ENCODE measurements at regions of chr1 and their contacts with region 1.

Region 1: GRCh38 chr1:183827801-183828200 is 22.9 kb downstream of the RGL1 start:
- DNase-seq: no peak
- H3K4me3 ChIP-seq: no peak overlapping the region
- H3K27ac ChIP-seq: no peak overlapping the region
- H3K4me1 ChIP-seq: no peaks in the 10 kb centered on the region
- H3K27me3 ChIP-seq: no peaks in the 10 kb centered on the region
- CTCF ChIP-seq: no peak
- POLR2A ChIP-seq: no peak

Region 2: GRCh38 chr1:183783767-183784637 is 43.8 kb before region 1 on chr1:
- intact Hi-C with region 1: no loop called
- DNase-seq: peak in 1 of 2 donors; percentile 37
- H3K4me3 ChIP-seq: no peak overlapping the region
- H3K27ac ChIP-seq: peak overlapping the region in 1 of 2 donors; percentile 2
- H3K4me1 ChIP-seq: no peaks in the 10 kb centered on the region
- H3K27me3 ChIP-seq: no peaks in the 10 kb centered on the region
- CTCF ChIP-seq: no peak
- POLR2A ChIP-seq: no peak

Region 3: DNA sequence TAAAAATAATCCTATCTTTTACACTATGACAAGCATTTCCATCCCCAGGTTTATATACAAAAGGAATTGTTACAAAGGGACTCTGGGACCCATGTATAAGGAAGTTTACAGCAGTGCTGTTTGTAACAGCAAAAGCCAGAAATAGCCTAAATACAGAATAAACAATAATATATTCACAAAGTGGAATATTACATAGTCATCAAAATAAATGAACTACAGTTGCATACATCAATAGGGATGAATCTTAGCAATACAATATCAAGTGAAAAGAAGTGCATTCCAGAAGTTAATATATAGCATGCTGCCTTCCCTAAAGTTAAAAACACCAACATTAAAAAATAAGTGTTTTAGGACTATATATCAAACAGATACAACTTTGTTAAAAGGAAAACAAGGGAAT is 849.5 kb after region 1 on chr1:
- intact Hi-C with region 1: loop called (anchors 5 kb)
- DNase-seq: no peak
- H3K4me3 ChIP-seq: no peak overlapping the region
- H3K27ac ChIP-seq: no peak overlapping the region
- H3K4me1 ChIP-seq: no peaks in the 10 kb centered on the region
- H3K27me3 ChIP-seq: no peaks in the 10 kb centered on the region
- CTCF ChIP-seq: no peak
- POLR2A ChIP-seq: no peak